Kidney (tissue), 22 donors: ENCODE measurements at regions of chr13 and their contacts with region 1.

Region 1: DNA sequence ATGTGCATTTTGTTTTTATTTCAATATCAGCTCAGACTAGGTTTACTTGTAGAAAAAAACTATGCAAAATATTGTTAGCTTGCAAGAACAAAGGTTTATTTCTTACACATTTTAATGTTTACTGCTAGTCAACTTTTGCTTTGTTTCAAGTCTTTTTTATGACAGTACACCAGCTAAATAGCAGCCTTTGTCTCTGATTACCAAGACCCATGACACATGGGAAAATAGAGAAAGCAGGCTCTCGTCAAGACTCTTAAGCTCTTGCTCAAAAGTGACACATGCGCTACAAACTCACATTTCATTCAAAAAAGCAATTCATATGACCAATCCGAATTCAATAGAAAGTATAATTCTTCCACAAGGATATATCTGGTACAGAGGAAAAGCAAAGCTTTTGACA is 642.3 kb upstream of the SLITRK1 start:
- DNase-seq: no peak
- H3K4me3 ChIP-seq: no peak overlapping the region
- H3K27ac ChIP-seq: no peak overlapping the region
- H3K4me1 ChIP-seq: no peaks in the 10 kb centered on the region
- H3K27me3 ChIP-seq: no peaks in the 10 kb centered on the region
- CTCF ChIP-seq: no peak

Region 2: GRCh38 chr13:84574851-84575250 is 50.3 kb after region 1 on chr13:
- intact Hi-C with region 1: no loop called
- DNase-seq: peak in 1 of 5 donors; percentile 20
- H3K4me3 ChIP-seq: no peak overlapping the region
- H3K27ac ChIP-seq: no peak overlapping the region
- H3K4me1 ChIP-seq: no peaks in the 10 kb centered on the region
- H3K27me3 ChIP-seq: no peaks in the 10 kb centered on the region
- CTCF ChIP-seq: no peak

Region 3: DNA sequence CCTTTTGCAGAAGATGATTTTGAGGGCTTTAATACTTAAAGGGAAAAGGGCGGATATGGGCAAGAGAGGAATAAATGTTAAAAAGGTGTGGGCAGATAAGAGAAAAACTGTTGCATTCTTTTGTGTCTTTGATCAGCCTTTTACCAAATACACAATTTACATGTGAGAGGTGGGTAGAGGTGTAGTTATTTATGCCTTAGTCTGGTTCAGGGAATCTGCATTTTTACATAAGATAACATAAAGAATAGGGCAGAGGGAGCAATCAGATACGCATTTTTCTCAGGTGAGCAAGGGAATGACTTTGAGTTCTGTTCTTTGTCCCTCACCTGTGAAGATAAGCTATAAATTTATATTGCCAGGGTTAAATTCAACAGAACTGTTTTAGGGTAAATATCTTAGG is 66.1 kb after region 1 on chr13:
- intact Hi-C with region 1: loop called (anchors 5 kb)
- DNase-seq: no peak
- H3K4me3 ChIP-seq: no peak overlapping the region
- H3K27ac ChIP-seq: no peak overlapping the region
- H3K4me1 ChIP-seq: no peaks in the 10 kb centered on the region
- H3K27me3 ChIP-seq: no peaks in the 10 kb centered on the region
- CTCF ChIP-seq: no peak